GM12878 (cell line): ENCODE measurements at regions of chr2 and their contacts with region 1.

Region 1: DNA sequence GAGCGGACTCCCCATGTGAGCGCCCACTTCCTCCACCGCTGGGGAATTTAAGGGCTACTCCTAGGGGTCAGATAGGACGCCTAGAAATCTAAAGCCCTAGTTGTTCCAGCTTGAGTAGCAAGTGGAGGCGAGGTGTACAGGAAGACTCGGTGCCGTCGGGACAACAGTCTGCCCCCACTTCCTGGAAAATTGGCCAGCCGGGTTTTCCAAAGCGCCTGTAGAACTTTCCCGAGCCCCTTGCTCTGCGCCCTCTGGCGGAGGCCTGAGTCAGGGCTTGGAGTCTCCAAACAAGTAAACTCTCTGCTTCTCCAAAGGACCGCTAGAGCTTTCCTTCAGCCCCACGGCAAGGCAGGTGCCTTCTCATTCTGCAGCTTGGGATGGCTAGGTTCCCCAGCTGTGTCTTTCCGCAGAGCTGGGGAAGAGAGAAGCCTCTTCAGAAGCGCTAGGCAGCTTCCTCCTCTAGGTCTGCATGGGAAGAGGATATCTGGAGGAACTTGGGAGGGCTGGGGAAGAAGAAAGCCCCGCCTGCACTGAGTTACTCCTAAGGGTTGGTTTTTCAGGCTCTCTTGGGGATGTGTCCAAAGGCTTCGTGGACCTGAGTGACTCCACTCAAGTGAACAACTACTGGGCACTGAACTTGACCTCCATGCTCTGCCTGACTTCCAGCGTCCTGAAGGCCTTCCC is 688 bp downstream of the SPR start:
- DNase-seq: no peak
- ATAC-seq: peak; percentile 68
- H3K4me3 ChIP-seq: peak overlapping the region; percentile 75
- H3K27ac ChIP-seq: no peak overlapping the region
- H3K4me1 ChIP-seq: peaks cover under 1% of the 10 kb centered on the region
- H3K27me3 ChIP-seq: peaks cover 2 to 10% of the 10 kb centered on the region in 2 experiments; a peak in 2 of 4 replicates
- CTCF ChIP-seq: peak; percentile 82 to 95 (median 93)
- EP300 ChIP-seq: no peak
- POLR2A ChIP-seq: no peak
- RAD21 ChIP-seq: 0 out of 2 replicates have a peak, but pooled peaks have one; percentile 26

Region 2: DNA sequence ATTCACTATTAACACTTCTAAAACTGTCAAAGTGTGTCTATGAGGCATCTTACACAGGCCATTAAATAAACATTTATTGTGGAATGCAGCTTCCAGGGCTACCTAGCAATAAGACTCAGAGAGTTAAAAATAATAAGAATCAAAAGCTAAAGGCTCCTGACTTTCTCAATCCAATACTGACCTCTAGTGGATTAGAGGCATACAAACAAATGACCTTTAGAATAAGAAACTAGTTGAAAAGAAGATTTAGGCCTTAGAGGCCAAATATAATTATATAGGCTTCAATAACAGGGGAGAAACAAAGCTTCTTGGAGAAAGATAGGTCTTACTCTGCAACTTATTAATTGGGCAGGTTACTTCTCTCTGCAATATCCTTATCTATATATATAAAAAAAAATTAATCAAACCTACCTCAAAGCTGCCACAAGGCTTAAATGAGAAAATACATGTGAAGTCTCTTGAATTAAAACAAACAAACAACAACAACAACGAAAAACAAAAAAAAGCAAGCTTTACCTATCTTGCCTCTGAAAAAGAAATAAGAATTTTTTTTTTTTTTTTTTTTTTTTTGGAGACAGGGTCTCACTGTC is 308.2 kb before region 1 on chr2:
- CTCF ChIA-PET with region 1: no interaction called
- POLR2A ChIA-PET with region 1: no interaction called
- RAD21 ChIA-PET with region 1: no interaction called
- SMC1A ChIA-PET with region 1: no interaction called
- in situ Hi-C with region 1: no loop called
- intact Hi-C with region 1: no loop called
- DNase-seq: no peak
- ATAC-seq: peak; percentile 71
- H3K4me3 ChIP-seq: no peak overlapping the region
- H3K27ac ChIP-seq: no peak overlapping the region
- H3K4me1 ChIP-seq: no peaks in the 10 kb centered on the region
- H3K27me3 ChIP-seq: no peaks in the 10 kb centered on the region
- CTCF ChIP-seq: peak; percentile 44 to 71 (median 53); a peak in 5 of 6 replicates
- EP300 ChIP-seq: no peak
- POLR2A ChIP-seq: no peak
- RAD21 ChIP-seq: peak; percentile 78

Region 3: DNA sequence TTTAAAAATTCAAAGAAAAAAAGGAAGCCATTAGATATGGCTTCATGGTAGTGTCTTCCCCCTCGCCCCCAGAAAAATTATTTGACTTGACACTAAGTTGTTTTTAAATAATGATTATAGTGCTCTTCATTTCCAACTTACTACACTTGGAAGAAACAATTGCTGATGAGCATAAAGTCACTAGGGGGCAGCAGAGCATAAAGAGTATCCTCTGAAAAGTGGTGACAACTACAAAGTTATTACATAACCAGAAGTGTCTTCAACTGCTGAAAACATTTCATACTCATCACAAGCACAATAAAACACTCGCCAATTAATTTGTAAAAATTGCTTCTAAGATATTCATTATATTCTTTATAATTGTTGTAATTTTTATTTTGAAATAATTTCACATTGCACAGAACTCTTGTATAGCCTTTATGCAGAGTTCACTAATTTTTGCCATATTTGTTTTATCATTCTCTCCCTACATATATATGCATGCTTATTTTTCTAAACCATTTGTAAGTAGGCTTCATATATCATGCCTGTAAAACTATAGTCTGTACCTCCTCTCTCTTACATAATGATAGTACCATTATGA is 116.9 kb before region 1 on chr2:
- CTCF ChIA-PET with region 1: interaction called, 5 read pairs
- POLR2A ChIA-PET with region 1: no interaction called
- RAD21 ChIA-PET with region 1: interaction called, 3 read pairs
- SMC1A ChIA-PET with region 1: no interaction called
- in situ Hi-C with region 1: no loop called
- intact Hi-C with region 1: loop called (anchors 1 kb)
- DNase-seq: peak; percentile 37
- ATAC-seq: peak; percentile 76
- H3K4me3 ChIP-seq: no peak overlapping the region
- H3K27ac ChIP-seq: no peak overlapping the region
- H3K4me1 ChIP-seq: no peaks in the 10 kb centered on the region
- H3K27me3 ChIP-seq: no peaks in the 10 kb centered on the region
- CTCF ChIP-seq: peak; percentile 62 to 87 (median 66)
- EP300 ChIP-seq: no peak
- POLR2A ChIP-seq: no peak
- RAD21 ChIP-seq: peak; percentile 95

Region 4: GRCh38 chr2:72803626-72804320 is 84.1 kb before region 1 on chr2:
- CTCF ChIA-PET with region 1: no interaction called
- POLR2A ChIA-PET with region 1: no interaction called
- RAD21 ChIA-PET with region 1: no interaction called
- SMC1A ChIA-PET with region 1: no interaction called
- in situ Hi-C with region 1: no loop called
- intact Hi-C with region 1: no loop called
- DNase-seq: no peak
- ATAC-seq: no peak
- H3K4me3 ChIP-seq: no peak overlapping the region
- H3K27ac ChIP-seq: no peak overlapping the region
- H3K4me1 ChIP-seq: no peaks in the 10 kb centered on the region
- H3K27me3 ChIP-seq: no peaks in the 10 kb centered on the region
- CTCF ChIP-seq: no peak
- EP300 ChIP-seq: no peak
- POLR2A ChIP-seq: no peak
- RAD21 ChIP-seq: no peak

Region 5: DNA sequence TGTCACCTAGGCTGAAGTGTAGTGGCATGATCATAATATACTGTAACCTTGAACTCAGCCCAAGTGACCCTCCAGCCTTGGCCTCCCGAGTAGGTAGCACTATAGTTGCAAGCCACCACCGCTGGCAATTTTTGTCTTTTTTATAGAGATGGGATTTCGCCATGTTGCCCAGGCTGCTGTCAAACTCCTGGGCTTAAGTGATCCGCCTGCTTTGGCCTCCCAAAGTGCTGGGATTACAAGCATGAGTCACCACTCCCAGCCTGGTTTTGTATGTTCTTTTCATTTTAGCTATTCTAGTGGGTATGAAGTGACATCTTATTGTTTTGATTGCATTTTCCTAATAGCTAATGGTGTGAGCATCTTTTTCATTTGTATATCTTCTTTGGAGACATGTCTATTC is 50.7 kb before region 1 on chr2:
- CTCF ChIA-PET with region 1: no interaction called
- POLR2A ChIA-PET with region 1: no interaction called
- RAD21 ChIA-PET with region 1: no interaction called
- SMC1A ChIA-PET with region 1: no interaction called
- in situ Hi-C with region 1: no loop called
- intact Hi-C with region 1: no loop called
- DNase-seq: no peak
- ATAC-seq: no peak
- H3K4me3 ChIP-seq: no peak overlapping the region
- H3K27ac ChIP-seq: no peak overlapping the region
- H3K4me1 ChIP-seq: no peaks in the 10 kb centered on the region
- H3K27me3 ChIP-seq: no peaks in the 10 kb centered on the region; a peak in 1 of 4 replicates
- CTCF ChIP-seq: no peak
- EP300 ChIP-seq: no peak
- POLR2A ChIP-seq: no peak
- RAD21 ChIP-seq: no peak

Region 6: DNA sequence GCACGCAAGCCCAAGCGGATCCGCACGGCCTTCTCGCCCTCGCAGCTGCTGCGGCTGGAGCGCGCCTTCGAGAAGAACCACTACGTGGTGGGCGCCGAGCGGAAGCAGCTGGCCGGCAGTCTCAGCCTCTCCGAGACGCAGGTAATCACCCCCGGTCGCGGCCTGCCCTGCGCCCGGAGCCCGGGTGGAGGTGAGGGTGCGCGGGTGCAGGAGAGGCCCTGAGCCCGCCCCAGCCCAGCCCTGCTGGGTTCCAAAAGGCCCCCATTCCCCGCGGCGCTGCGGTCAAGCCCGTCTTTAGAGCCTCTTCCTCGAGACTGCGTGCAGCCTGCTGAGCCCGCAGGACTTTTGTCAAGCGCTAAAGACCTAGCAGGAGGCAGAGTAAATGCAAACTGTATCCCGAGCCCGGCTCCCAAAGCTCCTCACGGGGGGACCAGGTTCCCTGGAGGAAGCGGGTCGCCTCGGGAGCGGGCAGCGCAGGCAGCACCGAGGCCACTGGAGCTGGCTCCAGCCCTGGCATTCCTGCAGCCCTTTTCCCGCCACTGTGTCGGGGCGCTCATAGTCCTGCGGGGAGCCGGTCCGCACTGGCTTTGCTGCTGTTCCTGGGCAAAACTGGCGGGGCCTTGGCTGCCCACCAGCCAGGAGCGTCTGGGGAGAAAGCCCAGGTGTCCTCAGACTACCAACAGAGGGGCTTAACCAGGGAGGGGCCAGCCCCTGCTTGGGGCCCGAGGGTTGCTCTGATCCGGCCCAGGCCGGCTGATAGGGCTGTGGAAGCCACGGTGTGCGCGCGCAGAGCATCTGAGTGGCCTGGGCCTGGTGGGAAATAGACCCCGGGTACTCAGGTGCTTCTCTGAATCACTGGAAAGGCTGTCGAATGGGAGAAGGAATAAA is 36.7 kb after region 1 on chr2:
- CTCF ChIA-PET with region 1: interaction called, 106 read pairs
- POLR2A ChIA-PET with region 1: no interaction called
- RAD21 ChIA-PET with region 1: interaction called, 88 read pairs
- SMC1A ChIA-PET with region 1: interaction called, 21 read pairs
- in situ Hi-C with region 1: no loop called
- intact Hi-C with region 1: no loop called
- DNase-seq: no peak
- ATAC-seq: peak; percentile 62
- H3K4me3 ChIP-seq: no peak overlapping the region
- H3K27ac ChIP-seq: no peak overlapping the region
- H3K4me1 ChIP-seq: no peaks in the 10 kb centered on the region; the same call in 1 of the 2 replicates
- H3K27me3 ChIP-seq: peaks cover 7 to 43% of the 10 kb centered on the region in 2 experiments
- CTCF ChIP-seq: no peak
- EP300 ChIP-seq: peak in 1 of 2 experiments; percentile 31; a peak in 1 of 4 replicates
- POLR2A ChIP-seq: no peak
- RAD21 ChIP-seq: no peak

Region 7: GRCh38 chr2:72953976-72954375 is 66.1 kb after region 1 on chr2:
- CTCF ChIA-PET with region 1: interaction called, 62 read pairs
- POLR2A ChIA-PET with region 1: no interaction called
- RAD21 ChIA-PET with region 1: interaction called, 16 read pairs
- SMC1A ChIA-PET with region 1: interaction called, 13 read pairs
- in situ Hi-C with region 1: no loop called
- intact Hi-C with region 1: no loop called
- DNase-seq: no peak
- ATAC-seq: peak; percentile 67
- H3K4me3 ChIP-seq: no peak overlapping the region
- H3K27ac ChIP-seq: 0 out of 2 replicates have a peak overlapping the region, but pooled peaks have one; percentile 24
- H3K4me1 ChIP-seq: no peaks in the 10 kb centered on the region
- H3K27me3 ChIP-seq: no peaks in the 10 kb centered on the region
- CTCF ChIP-seq: no peak
- EP300 ChIP-seq: no peak
- POLR2A ChIP-seq: no peak; the same call in 1 of the 2 replicates
- RAD21 ChIP-seq: no peak

Region 8: GRCh38 chr2:72993147-72993932 is 105.4 kb after region 1 on chr2:
- CTCF ChIA-PET with region 1: interaction called, 23 read pairs
- POLR2A ChIA-PET with region 1: no interaction called
- RAD21 ChIA-PET with region 1: no interaction called
- SMC1A ChIA-PET with region 1: interaction called, 5 read pairs
- in situ Hi-C with region 1: no loop called
- intact Hi-C with region 1: no loop called
- DNase-seq: peak; percentile 3
- ATAC-seq: peak; percentile 89
- H3K4me3 ChIP-seq: no peak overlapping the region
- H3K27ac ChIP-seq: no peak overlapping the region
- H3K4me1 ChIP-seq: no peaks in the 10 kb centered on the region
- H3K27me3 ChIP-seq: no peaks in the 10 kb centered on the region
- CTCF ChIP-seq: peak; percentile 68 to 76 (median 73)
- EP300 ChIP-seq: no peak
- POLR2A ChIP-seq: no peak
- RAD21 ChIP-seq: peak; percentile 41; the same call in 1 of the 2 replicates

Region 9: GRCh38 chr2:73176881-73177644 is 289.2 kb after region 1 on chr2:
- CTCF ChIA-PET with region 1: interaction called, 82 read pairs
- POLR2A ChIA-PET with region 1: no interaction called
- RAD21 ChIA-PET with region 1: interaction called, 33 read pairs
- SMC1A ChIA-PET with region 1: interaction called, 19 read pairs
- in situ Hi-C with region 1: loop called (anchors 5 kb)
- intact Hi-C with region 1: loop called (anchors 5 kb)
- DNase-seq: no peak
- ATAC-seq: peak; percentile 94
- H3K4me3 ChIP-seq: peak overlapping the region; percentile 59; the same call in 1 of the 2 replicates
- H3K27ac ChIP-seq: no peak overlapping the region
- H3K4me1 ChIP-seq: peaks cover 13% of the 10 kb centered on the region; the same call in 1 of the 2 replicates
- H3K27me3 ChIP-seq: peaks cover 13 to 14% of the 10 kb centered on the region in 2 experiments; a peak in 3 of 4 replicates
- CTCF ChIP-seq: peak; percentile 91 to 99 (median 97); a peak in 5 of 6 replicates
- EP300 ChIP-seq: no peak
- POLR2A ChIP-seq: no peak
- RAD21 ChIP-seq: peak; percentile 71